Activated CD4-positive, alpha-beta memory T cell treated with anti-CD3 and anti-CD28 coated beads for 36 hours (primary cell): ENCODE measurements at regions of chr3 and their contacts with region 1.

Region 1: DNA sequence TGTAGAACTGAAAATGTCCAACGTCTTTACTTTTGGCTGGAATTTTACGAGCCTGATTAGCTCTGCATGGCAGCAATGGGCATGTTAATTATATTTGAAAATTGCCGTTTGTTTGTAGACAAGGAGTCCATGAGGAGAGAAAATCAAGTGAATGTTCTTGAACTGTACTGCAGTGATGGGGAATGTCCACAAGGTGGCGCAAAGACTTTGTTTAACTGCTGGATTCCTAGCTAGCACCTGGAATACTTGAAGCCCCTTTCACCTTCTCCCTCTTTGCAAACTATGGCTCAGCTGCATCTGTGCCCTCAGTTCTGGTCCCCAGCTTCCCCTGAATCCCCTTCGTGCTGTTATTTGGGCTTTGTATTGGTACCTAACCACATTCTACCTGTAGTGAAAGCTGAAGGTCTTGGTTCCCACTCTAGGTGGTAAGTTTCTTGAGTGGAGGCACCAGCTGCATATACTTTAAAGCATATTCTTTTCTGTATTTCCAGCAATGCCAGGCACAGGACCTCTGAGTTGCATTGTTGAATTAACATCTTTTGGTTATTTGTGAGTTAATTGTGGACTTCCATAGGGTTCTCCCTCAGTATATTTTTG is 25.3 kb downstream of the EXOG start:
- DNase-seq: peak; percentile 72
- H3K4me3 Mint-ChIP-seq: no peak overlapping the region
- H3K27ac Mint-ChIP-seq: no peak overlapping the region
- H3K4me1 Mint-ChIP-seq: peaks cover 30% of the 10 kb centered on the region
- H3K27me3 Mint-ChIP-seq: no peaks in the 10 kb centered on the region

Region 2: GRCh38 chr3:38532529-38532928 is 11.0 kb after region 1 on chr3:
- CTCF ChIA-PET with region 1: interaction called, 18 read pairs
- POLR2A ChIA-PET with region 1: no interaction called
- intact Hi-C with region 1: no loop called
- DNase-seq: no peak
- H3K4me3 Mint-ChIP-seq: no peak overlapping the region
- H3K27ac Mint-ChIP-seq: no peak overlapping the region
- H3K4me1 Mint-ChIP-seq: peaks cover 3% of the 10 kb centered on the region
- H3K27me3 Mint-ChIP-seq: no peaks in the 10 kb centered on the region

Region 3: GRCh38 chr3:38651154-38651789 is 129.8 kb after region 1 on chr3:
- CTCF ChIA-PET with region 1: interaction called, 81 read pairs
- POLR2A ChIA-PET with region 1: no interaction called
- intact Hi-C with region 1: loop called (anchors 1 kb)
- DNase-seq: peak; percentile 80
- H3K4me3 Mint-ChIP-seq: peak overlapping the region; percentile 10
- H3K27ac Mint-ChIP-seq: no peak overlapping the region
- H3K4me1 Mint-ChIP-seq: peaks cover 11% of the 10 kb centered on the region
- H3K27me3 Mint-ChIP-seq: peaks cover 13% of the 10 kb centered on the region

Region 4: GRCh38 chr3:38843898-38844297 is 322.4 kb after region 1 on chr3:
- CTCF ChIA-PET with region 1: interaction called, 19 read pairs
- POLR2A ChIA-PET with region 1: no interaction called
- intact Hi-C with region 1: no loop called
- DNase-seq: no peak
- H3K4me3 Mint-ChIP-seq: no peak overlapping the region
- H3K27ac Mint-ChIP-seq: no peak overlapping the region
- H3K4me1 Mint-ChIP-seq: no peaks in the 10 kb centered on the region
- H3K27me3 Mint-ChIP-seq: peaks cover 3% of the 10 kb centered on the region

Region 5: DNA sequence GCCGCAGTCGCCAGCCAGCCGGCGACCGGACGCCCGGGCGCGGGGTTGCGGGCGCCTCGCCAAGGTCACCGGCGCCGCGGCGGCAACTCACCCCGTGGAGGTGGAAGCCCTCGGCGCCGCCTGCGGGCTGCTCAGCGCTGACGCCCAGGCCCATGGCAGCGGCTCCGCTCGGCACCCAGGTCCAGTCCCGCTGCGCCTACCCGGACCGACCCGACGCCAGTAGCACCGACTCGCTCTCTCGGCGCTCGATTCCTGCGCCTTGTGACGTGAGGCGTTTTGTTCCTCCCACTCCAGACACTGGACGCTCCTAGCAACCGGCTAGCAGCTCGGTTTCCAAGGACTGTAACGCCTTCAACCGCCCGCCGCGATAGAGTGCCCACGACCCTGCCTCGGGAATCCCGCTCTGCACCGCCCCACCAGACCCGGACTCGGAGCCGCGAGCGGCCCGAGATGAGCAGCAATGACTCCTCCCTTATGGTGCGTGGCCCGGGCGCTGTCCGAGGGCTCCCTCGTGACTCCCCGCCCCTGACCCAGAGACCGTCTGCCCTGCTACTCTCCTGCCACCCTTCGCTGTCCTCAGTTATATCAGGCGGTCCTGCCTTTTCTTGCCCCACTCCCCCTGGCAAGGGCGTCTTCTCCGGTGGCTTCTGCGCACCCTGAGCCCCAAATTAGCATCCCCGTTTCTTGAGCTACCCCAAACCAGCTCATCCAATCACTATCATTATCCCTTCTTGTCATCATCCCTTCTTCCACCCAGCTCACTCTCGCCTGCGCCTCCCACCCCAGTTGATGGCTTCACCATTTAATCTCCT is 586.1 kb after region 1 on chr3 and contains the starts of genes GORASP1 and TTC21A:
- CTCF ChIA-PET with region 1: no interaction called
- POLR2A ChIA-PET with region 1: no interaction called
- intact Hi-C with region 1: no loop called
- DNase-seq: peak; percentile 83
- H3K4me3 Mint-ChIP-seq: peak within 1 kb of the TSS; percentile 81
- H3K27ac Mint-ChIP-seq: peak within 1 kb of the TSS; percentile 74
- H3K4me1 Mint-ChIP-seq: peaks cover 42% of the 10 kb centered on the region
- H3K27me3 Mint-ChIP-seq: no peaks in the 10 kb centered on the region
- total RNA-seq, gene GORASP1: 32.7 to 34.1 TPM
- total RNA-seq, gene TTC21A: 1.7 to 1.8 TPM